ENCODE measurements at regions of chr16 and their contacts with region 1.

Region 1: DNA sequence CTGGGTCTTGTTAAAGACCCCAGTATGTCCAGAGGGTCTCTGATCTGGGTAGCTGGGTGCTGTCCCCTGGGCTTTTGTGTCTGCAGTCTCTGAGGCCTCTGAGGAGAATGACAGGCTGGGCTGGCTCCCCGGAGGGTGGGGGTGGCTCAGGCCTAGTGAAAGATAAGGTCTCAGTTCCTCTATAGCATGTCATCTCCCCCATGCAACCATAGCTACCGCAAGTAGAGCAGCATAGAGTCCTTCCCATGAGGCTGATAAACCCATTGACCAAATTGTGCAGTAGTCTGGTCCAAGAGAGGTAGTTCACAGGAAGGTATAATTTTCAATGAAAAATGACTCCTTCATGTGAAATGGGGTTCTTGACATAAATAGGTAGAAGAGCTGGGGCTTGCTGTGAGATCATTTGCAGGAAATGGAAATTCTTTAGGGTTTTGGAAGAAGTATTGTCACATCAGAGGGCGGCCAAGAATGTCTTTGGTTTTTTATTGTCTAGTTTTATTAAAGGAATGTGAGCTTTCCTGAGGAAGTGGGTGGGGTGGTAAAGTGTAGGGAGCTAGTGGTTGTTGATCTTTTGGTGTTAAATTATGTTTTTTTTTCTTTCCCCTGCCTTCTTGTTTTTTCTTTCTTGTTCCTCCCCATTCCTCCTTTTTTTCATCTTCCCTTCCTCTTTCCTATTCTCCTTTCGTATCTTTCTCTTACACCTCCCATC is 21.0 kb downstream of the SLC7A6OS start:
- DNase-seq: peak; percentile 86
- H3K4me3 Mint-ChIP-seq: peak overlapping the region; percentile 72
- H3K27ac Mint-ChIP-seq: peak overlapping the region; percentile 94
- H3K4me1 Mint-ChIP-seq: peaks cover 72% of the 10 kb centered on the region
- H3K27me3 Mint-ChIP-seq: no peaks in the 10 kb centered on the region

Region 2: GRCh38 chr16:68275611-68276191 is 14.1 kb before region 1 on chr16:
- intact Hi-C with region 1: loop called (anchors 1 kb)
- DNase-seq: peak; percentile 85
- H3K4me3 Mint-ChIP-seq: peak overlapping the region; percentile 73
- H3K27ac Mint-ChIP-seq: peak overlapping the region; percentile 83
- H3K4me1 Mint-ChIP-seq: peaks cover 64% of the 10 kb centered on the region
- H3K27me3 Mint-ChIP-seq: no peaks in the 10 kb centered on the region

Region 3: DNA sequence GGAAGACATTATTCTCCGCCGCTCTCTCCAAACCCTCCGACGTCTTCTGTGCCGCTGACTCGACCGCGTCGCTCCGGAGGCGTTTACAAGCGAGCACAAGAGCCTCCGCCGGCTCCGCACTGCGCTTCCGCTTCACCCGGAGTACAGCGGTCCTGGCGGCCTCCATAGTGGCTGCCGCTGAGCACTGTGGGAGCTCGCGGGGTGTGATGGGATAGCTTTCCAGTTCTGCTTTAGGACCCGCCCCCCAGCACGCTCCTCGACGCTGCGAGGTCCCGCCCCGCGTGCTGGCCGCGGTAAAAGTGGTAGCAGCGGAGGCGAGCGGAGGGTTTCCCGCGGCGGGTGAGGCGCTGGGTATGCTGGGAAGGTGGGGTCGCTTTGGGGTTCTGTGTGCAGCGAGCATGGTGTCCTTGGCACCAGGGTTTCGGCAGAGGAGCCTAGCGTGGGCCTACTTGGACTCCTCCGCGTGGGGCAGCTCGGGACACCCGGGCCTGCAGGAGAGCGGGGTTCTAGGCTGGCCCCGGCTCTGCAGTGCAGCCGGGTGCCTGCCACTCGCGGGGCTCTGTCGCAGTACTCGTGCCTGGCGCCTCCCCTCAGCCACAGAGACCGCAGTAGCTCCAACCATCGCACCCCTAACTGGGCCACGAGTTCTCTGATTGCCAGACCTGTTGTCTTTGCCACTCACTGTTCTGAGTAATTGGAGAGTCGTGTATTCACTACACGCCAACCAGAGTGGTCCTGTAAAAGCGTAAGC is 21.2 kb after region 1 on chr16 and contains the starts of genes PRMT7 and SLC7A6OS:
- intact Hi-C with region 1: loop called (anchors 2 kb)
- DNase-seq: peak; percentile 98
- H3K4me3 Mint-ChIP-seq: peak within 1 kb of the TSS; percentile 89
- H3K27ac Mint-ChIP-seq: peak within 1 kb of the TSS; percentile 86
- H3K4me1 Mint-ChIP-seq: peaks cover 37% of the 10 kb centered on the region
- H3K27me3 Mint-ChIP-seq: no peaks in the 10 kb centered on the region
- total RNA-seq, gene PRMT7: 69.7 and 72.2 TPM in 2 replicates
- total RNA-seq, gene SLC7A6OS: 22.3 and 27.1 TPM in 2 replicates

Region 4: GRCh38 chr16:68685685-68686478 is 396.1 kb after region 1 on chr16:
- intact Hi-C with region 1: no loop called
- DNase-seq: no peak
- H3K4me3 Mint-ChIP-seq: no peak overlapping the region
- H3K27ac Mint-ChIP-seq: no peak overlapping the region
- H3K4me1 Mint-ChIP-seq: no peaks in the 10 kb centered on the region
- H3K27me3 Mint-ChIP-seq: no peaks in the 10 kb centered on the region

Measured in activated CD4-positive, alpha-beta T cell treated with anti-CD3 and anti-CD28 coated beads, Interleukin-2, amount 10 ng/mL, durations not matched to agents 24 days and 14 days (primary cell).